HepG2 (cell line): ENCODE measurements at regions of chr3 and their contacts with region 1.

Region 1: GRCh38 chr3:110881068-110881467 is 190.5 kb upstream of the NECTIN3 start:
- DNase-seq: peak; percentile 63
- ATAC-seq: peak; percentile 100
- H3K4me3 ChIP-seq: no peak overlapping the region
- H3K27ac ChIP-seq: no peak overlapping the region
- H3K4me1 ChIP-seq: no peaks in the 10 kb centered on the region
- H3K27me3 ChIP-seq: no peaks in the 10 kb centered on the region
- CTCF ChIP-seq: peak; percentile 66
- EP300 ChIP-seq: no peak
- POLR2A ChIP-seq: no peak
- RAD21 ChIP-seq: 0 out of 2 replicates have a peak, but pooled peaks have one; percentile 21

Region 2: DNA sequence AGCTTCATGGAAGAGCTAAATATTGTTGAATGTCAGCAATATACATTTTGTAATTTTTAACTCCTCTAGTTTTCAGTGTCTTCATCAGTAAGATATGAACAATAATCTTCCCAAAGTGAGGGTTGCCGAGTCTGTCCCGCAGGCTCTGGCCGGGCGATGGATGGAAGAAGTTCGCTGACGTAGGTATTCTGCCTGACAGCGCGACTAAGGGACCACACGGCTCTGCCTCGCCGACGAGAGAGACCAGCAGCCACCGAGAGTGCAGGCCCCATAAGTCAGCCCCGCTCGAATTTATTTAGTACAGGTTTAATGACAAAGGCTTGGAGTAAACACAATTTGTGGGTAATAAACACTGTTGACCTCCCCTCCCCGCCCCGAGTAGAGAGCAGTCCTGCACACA is 236.9 kb before region 1 on chr3:
- CTCF ChIA-PET with region 1: no interaction called
- POLR2A ChIA-PET with region 1: no interaction called
- in situ Hi-C with region 1: no loop called
- intact Hi-C with region 1: no loop called
- DNase-seq: no peak
- ATAC-seq: no peak
- H3K4me3 ChIP-seq: no peak overlapping the region
- H3K27ac ChIP-seq: no peak overlapping the region
- H3K4me1 ChIP-seq: no peaks in the 10 kb centered on the region
- H3K27me3 ChIP-seq: no peaks in the 10 kb centered on the region
- CTCF ChIP-seq: no peak
- EP300 ChIP-seq: no peak
- POLR2A ChIP-seq: no peak
- RAD21 ChIP-seq: no peak

Region 3: DNA sequence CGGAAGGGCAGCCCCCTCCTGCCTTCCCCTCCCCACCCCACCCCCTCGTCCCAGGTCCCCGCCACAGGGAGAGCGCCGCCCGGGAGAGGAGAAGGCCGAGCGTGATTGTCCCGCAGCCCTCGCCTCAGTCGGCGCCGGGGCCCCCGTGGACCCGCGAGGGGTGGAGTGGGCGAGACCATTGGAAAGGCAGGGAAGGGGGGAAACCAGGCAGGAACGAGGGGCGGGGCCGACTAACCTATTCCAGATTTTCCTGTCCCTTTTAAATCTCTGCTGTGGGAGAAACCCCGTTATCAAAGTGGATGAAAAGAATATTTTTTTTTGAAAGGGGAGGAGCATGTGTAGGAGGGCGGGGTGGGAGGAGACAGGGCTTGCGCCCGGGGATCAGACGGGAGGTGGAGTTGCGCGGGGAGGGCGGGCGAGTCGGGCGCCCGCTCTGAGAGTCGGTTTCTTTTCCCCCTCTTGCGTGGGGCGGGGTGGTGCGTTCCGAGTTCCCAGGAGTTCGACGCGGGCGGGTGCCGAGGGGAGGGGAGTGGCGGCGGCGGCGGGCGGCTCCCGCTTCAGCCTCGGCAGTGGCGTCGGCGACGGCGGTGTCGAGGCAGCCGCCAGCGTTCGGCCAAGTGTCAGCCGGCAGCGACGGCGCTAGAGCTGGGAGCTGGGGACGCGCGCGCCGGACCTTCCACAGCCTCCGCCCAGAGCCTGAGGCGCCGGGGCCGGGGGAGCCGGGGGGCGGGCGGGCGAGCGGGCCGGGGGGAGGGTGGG is 190.4 kb after region 1 on chr3 and contains the start of gene NECTIN3:
- CTCF ChIA-PET with region 1: no interaction called
- POLR2A ChIA-PET with region 1: no interaction called
- in situ Hi-C with region 1: no loop called
- intact Hi-C with region 1: loop called (anchors 5 kb)
- DNase-seq: peak; percentile 90
- ATAC-seq: peak; percentile 77
- H3K4me3 ChIP-seq: peak within 1 kb of the TSS; percentile 96 to 97 (median 96)
- H3K27ac ChIP-seq: peak within 1 kb of the TSS; percentile 89
- H3K4me1 ChIP-seq: peaks cover 58% of the 10 kb centered on the region
- H3K27me3 ChIP-seq: no peaks in the 10 kb centered on the region; a peak in 1 of 5 replicates
- CTCF ChIP-seq: no peak; the same call in 1 of the 2 replicates
- EP300 ChIP-seq: no peak
- POLR2A ChIP-seq: peak; percentile 8 to 50; a peak in 2 of 4 replicates
- RAD21 ChIP-seq: no peak
- total RNA-seq, gene NECTIN3: 28.7 and 45.1 TPM in 2 replicates